ENCODE measurements at regions of chr2 and their contacts with region 1.

Region 1: GRCh38 chr2:25794544-25795276 is 83.6 kb downstream of the ASXL2 start:
- DNase-seq: no peak
- H3K4me3 Mint-ChIP-seq: peak overlapping the region; percentile 85
- H3K27ac Mint-ChIP-seq: peak overlapping the region; percentile 91
- H3K4me1 Mint-ChIP-seq: peaks cover 70% of the 10 kb centered on the region
- H3K27me3 Mint-ChIP-seq: no peaks in the 10 kb centered on the region

Region 2: DNA sequence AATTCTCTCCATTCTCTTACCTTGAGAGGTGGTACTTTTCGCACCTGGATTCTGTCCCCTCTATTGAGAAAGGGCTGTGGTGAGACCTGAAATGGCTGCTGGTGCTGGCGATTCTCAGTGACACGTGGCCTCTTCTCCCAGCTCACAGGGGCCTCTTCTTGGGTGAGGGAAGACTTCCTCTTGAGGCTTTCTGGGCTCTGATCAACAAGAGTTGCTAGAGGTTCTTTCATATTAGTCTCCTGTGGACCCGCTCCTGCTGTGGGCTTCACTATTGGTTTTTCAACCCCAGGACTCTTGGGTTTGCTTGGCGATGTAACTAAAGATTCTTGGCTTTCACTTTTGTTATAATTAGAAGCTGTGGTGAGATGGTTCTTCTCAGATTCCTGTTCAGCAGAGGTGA is 45.0 kb before region 1 on chr2:
- intact Hi-C with region 1: loop called (anchors 5 kb)
- DNase-seq: no peak
- H3K4me3 Mint-ChIP-seq: no peak overlapping the region
- H3K27ac Mint-ChIP-seq: peak overlapping the region; percentile 8
- H3K4me1 Mint-ChIP-seq: peaks cover 33% of the 10 kb centered on the region
- H3K27me3 Mint-ChIP-seq: no peaks in the 10 kb centered on the region

Region 3: GRCh38 chr2:25817630-25818029 is 22.9 kb after region 1 on chr2:
- intact Hi-C with region 1: loop called (anchors 1 kb)
- DNase-seq: no peak
- H3K4me3 Mint-ChIP-seq: no peak overlapping the region
- H3K27ac Mint-ChIP-seq: peak overlapping the region; percentile 82
- H3K4me1 Mint-ChIP-seq: peaks cover 57% of the 10 kb centered on the region
- H3K27me3 Mint-ChIP-seq: no peaks in the 10 kb centered on the region

Region 4: GRCh38 chr2:25831746-25832449 is 37.2 kb after region 1 on chr2:
- intact Hi-C with region 1: loop called (anchors 1 kb)
- DNase-seq: no peak
- H3K4me3 Mint-ChIP-seq: peak overlapping the region; percentile 39
- H3K27ac Mint-ChIP-seq: peak overlapping the region; percentile 77
- H3K4me1 Mint-ChIP-seq: peaks cover 53% of the 10 kb centered on the region
- H3K27me3 Mint-ChIP-seq: no peaks in the 10 kb centered on the region

Region 5: DNA sequence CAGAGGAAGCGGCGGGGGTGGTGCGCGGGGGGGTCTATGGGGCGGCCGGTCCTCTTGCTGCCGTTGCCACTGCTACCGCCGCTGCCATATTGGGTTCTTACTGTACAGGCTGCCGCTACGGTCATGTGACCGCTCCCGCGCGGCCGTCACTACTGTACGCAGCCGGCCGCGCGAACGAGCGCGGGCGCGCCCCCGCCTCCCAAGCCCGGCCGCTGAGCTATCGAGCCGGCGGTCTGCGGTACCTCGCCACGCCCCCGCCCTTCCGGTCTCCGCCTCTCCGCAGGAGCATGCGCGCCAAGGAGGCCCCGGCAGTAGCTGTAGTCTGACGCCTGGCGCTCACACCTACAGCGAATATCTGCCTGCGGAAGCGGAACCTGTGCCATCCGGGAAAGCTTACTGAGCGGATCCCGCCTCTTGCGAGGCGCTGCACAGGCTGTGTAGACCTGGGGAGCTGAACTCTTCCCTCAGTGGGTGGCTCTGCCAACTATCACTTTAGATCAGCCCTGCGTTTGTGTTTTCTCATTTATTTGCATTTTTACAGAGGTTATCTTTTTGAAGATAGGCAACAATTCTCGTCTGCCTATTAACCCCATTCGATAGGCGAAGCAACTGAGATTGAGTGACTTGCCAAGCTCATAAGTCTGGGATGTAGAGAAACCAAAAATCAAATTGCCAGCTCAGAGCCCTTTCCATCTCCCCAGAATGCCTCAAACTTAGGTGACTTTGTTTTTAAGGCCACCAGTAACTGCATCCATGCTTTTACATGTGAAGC is 83.8 kb after region 1 on chr2 and contains the start of gene ASXL2:
- intact Hi-C with region 1: loop called (anchors 2 kb)
- DNase-seq: peak; percentile 98
- H3K4me3 Mint-ChIP-seq: peak within 1 kb of the TSS; percentile 95
- H3K27ac Mint-ChIP-seq: peak within 1 kb of the TSS; percentile 95
- H3K4me1 Mint-ChIP-seq: peaks cover 43% of the 10 kb centered on the region
- H3K27me3 Mint-ChIP-seq: no peaks in the 10 kb centered on the region
- total RNA-seq, gene ASXL2: 76.7 and 80.7 TPM in 2 replicates

Region 6: DNA sequence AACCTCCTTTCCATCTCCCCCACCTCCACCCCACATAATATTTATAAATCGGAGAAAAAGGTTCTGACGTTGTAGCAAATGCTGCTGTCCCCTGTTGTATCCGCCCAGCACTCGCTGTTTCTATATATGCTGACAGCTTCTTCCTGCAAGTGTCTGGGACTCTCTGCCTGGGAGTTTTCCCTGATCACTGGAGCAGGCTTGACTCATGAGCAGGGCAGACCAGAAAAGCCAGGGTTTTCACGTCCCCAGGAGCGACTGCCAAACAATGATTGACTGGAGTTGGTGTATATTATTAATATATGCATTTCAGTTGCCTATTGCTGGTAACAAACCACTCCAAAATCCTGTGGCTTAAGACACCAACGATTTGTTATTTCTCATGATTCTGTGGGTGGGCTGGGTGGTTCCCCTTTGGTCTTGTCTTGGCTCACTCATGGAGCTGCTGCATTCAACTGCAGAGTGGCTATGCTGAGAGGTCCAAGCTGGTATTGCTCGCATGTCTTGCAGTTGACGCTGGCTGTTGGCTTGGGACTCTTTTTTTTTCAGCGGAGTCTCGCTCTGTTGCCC is 104.8 kb after region 1 on chr2:
- intact Hi-C with region 1: no loop called
- DNase-seq: no peak
- H3K4me3 Mint-ChIP-seq: no peak overlapping the region
- H3K27ac Mint-ChIP-seq: no peak overlapping the region
- H3K4me1 Mint-ChIP-seq: no peaks in the 10 kb centered on the region
- H3K27me3 Mint-ChIP-seq: peaks cover 8% of the 10 kb centered on the region

Measured in activated T-helper 2 cell treated with anti-CD3 and anti-CD28 coated beads, Interferon-gamma antibody, Interleukin-2, Interleukin-4, amounts not matched to agents 10 μg/mL and 5 μg/mL and 100 μg/mL, durations not matched to agents 14 hours and 24 hours and 36 hours (primary cell).